ENCODE measurements at regions of chr9 and their contacts with region 1.

Region 1: DNA sequence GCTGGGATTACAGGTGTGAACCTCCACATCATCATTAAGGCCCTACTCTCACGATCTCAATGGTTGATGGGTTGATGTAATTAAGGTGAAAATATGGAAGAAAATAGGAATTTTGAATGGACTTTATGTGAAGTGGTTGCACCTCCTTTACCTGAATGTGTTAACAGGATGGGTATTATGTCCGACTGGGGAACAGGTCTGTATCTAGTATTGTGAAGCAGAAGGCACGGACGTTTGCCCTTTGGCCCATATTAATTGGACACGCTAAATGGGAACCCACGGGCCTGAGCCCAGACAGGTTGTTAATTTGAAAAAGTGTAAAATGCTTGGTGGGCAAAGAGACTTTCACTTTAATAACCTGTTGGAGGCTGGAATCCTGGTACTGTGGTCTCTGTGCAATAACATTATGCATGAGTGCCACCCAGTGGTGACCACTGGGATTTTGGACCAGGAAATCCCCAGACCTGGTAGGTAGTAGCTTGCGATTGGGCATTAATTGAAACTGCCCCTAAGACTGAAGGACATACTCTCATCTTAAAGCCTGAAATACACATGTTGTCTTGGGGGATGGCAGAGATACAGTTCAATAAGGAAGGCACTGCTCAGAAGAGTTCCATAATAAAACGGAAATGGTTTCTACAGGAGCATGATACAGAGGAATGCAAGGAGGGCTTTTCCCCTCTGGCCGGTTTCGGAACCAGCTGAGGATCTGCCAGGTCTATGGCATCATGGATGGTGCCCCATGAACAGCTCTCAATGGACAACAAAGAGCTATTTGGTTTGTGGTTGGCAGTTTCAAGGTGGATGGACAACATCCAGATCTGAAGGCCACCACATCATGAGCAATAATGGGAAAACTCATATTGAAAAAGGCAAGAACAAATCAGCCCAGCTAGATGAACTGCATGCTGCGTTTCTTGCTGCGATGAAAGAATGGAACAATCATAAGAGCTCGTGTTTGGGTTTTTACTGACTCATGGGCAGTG is 26.2 kb upstream of the BICD2 start:
- DNase-seq: peak; percentile 55
- ATAC-seq: peak; percentile 96
- H3K4me3 ChIP-seq: no peak overlapping the region
- H3K27ac ChIP-seq: no peak overlapping the region
- H3K4me1 ChIP-seq: no peaks in the 10 kb centered on the region
- H3K27me3 ChIP-seq: no peaks in the 10 kb centered on the region
- CTCF ChIP-seq: peak; percentile 79

Region 2: DNA sequence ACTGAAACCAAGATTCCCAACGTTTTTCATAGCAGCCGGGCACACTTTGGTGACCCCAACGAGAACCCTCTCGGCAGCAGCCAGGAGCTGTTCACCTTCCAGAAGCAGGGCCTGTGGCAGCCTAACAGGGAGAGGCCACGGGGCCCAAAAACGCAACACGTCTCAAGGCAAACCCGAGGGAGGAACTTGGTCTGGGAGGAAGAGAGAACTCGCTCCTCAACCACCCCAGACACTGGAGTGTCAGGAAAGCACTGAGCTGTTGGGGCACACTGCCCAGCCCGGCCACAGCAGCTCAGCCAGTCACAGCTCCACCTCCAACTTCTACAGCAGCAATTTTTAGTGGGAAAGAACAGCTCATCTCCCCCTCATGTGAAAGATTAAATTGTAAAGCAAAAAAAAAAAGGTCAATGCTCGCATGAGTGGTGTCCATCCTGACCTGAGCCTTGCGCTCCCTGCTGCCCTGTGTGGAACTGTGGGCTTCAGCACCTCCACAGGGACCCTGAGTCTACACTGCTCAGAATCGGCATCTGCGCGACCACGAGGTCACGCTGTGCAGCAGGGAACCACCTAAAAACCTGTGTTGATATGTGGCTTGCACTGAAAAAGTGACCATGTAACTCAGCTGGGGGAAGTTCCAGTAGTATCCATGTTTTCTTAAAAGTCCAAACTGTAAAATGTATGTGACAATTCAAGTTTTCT is 175.9 kb before region 1 on chr9:
- CTCF ChIA-PET with region 1: no interaction called
- POLR2A ChIA-PET with region 1: interaction called, 10 read pairs
- in situ Hi-C with region 1: no loop called
- intact Hi-C with region 1: no loop called
- DNase-seq: no peak
- ATAC-seq: no peak
- H3K4me3 ChIP-seq: no peak overlapping the region
- H3K27ac ChIP-seq: no peak overlapping the region
- H3K4me1 ChIP-seq: no peaks in the 10 kb centered on the region
- H3K27me3 ChIP-seq: no peaks in the 10 kb centered on the region
- CTCF ChIP-seq: no peak

Region 3: GRCh38 chr9:92716557-92716956 is 74.3 kb before region 1 on chr9:
- CTCF ChIA-PET with region 1: interaction called, 9 read pairs
- POLR2A ChIA-PET with region 1: no interaction called
- in situ Hi-C with region 1: no loop called
- intact Hi-C with region 1: loop called (anchors 2 kb)
- DNase-seq: peak; percentile 38
- ATAC-seq: peak; percentile 82
- H3K4me3 ChIP-seq: no peak overlapping the region
- H3K27ac ChIP-seq: no peak overlapping the region
- H3K4me1 ChIP-seq: no peaks in the 10 kb centered on the region
- H3K27me3 ChIP-seq: no peaks in the 10 kb centered on the region
- CTCF ChIP-seq: peak; percentile 87

Region 4: GRCh38 chr9:92764988-92765936 is 25.6 kb before region 1 on chr9:
- CTCF ChIA-PET with region 1: no interaction called
- POLR2A ChIA-PET with region 1: no interaction called
- in situ Hi-C with region 1: no loop called
- intact Hi-C with region 1: loop called (anchors 2 kb)
- DNase-seq: peak; percentile 61
- ATAC-seq: peak; percentile 98
- H3K4me3 ChIP-seq: peak overlapping the region; percentile 60 to 74
- H3K27ac ChIP-seq: peak overlapping the region; percentile 79
- H3K4me1 ChIP-seq: peaks cover 7% of the 10 kb centered on the region; the same call in 1 of the 2 replicates
- H3K27me3 ChIP-seq: no peaks in the 10 kb centered on the region
- CTCF ChIP-seq: peak; percentile 95

Measured in Panc1 (cell line).